ENCODE measurements at regions of chr4 and their contacts with region 1.

Region 1: DNA sequence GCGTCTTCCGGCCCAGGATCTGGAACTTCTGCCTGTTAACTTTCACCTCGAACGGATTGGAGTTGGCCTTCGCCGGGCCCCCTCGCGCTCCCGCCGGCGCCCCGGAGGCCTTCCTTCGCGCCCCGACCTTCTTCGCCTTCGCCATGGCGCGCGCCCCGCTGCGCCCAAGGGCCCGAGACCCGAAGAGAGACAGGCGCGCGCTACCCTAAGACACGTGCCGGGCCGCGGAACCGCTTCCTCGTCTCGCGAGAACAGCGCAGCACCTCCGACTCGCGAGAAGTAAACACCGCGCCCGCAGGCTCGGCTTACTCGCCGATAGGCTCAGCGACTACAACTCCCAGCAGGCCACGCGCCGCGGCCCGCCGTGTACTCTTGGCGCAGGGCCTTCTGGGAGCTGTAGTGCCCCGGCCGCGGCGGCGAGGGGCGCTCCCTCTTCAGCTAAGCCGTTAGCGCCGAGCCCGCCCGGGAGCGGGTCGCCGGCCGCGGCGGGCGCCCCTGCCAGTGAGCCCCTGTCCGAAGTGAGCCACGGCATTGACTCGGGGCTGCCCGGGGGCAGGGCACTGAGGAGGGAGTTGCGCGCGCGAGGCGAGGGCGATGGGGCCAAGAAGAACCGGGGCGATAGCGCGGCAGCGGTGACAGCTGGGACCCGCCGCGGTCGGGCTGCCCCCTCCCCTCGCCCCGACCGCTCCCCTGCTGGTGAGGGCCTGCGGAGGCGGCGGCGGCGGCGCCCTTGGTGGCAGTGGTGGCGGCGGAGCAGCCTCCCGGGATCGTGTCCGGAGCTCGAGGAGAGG is at the starts of genes GRK4 and NOP14:
- DNase-seq: peak; percentile 99
- ATAC-seq: peak; percentile 87
- H3K4me3 Mint-ChIP-seq: peak within 1 kb of the TSS; percentile 83
- H3K27ac Mint-ChIP-seq: peak within 1 kb of the TSS; percentile 86
- H3K4me1 Mint-ChIP-seq: peaks cover 34% of the 10 kb centered on the region
- H3K27me3 Mint-ChIP-seq: no peaks in the 10 kb centered on the region
- total RNA-seq, gene GRK4: 2.4 to 2.5 TPM
- total RNA-seq, gene NOP14: 86.8 to 106 TPM

Region 2: GRCh38 chr4:1856042-1856788 is 1107.2 kb before region 1 on chr4 and contains the start of gene LETM1:
- CTCF ChIA-PET with region 1: no interaction called
- POLR2A ChIA-PET with region 1: no interaction called
- intact Hi-C with region 1: loop called in 1 of 2 experiments (anchors 5 kb)
- DNase-seq: peak; percentile 97
- ATAC-seq: peak; percentile 99
- H3K4me3 Mint-ChIP-seq: peak within 1 kb of the TSS; percentile 78
- H3K27ac Mint-ChIP-seq: peak within 1 kb of the TSS; percentile 55
- H3K4me1 Mint-ChIP-seq: peaks cover 40% of the 10 kb centered on the region
- H3K27me3 Mint-ChIP-seq: no peaks in the 10 kb centered on the region
- total RNA-seq, gene LETM1: 41.6 to 51.3 TPM

Region 3: DNA sequence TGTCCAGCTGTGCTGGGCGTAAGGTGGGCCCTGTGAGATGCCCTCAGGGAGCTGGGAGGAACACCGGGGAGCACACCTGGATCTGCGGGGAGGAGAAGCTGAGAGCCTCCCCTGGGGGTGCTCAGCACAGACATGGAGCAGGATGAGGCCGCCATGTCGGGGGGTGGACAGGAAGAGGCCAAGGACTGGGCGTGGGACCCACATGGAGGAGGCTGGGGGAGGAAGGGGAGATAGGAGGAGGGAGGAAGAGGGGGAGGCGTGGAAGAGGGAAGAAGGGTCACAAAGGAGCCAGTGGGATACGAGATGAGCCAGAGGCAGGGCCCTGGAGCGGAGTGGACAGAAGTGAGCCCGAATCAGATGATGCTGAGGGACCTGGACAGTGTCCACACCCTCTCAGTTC is 611.2 kb before region 1 on chr4:
- CTCF ChIA-PET with region 1: no interaction called
- POLR2A ChIA-PET with region 1: no interaction called
- intact Hi-C with region 1: no loop called
- DNase-seq: no peak
- ATAC-seq: no peak
- H3K4me3 Mint-ChIP-seq: no peak overlapping the region
- H3K27ac Mint-ChIP-seq: no peak overlapping the region
- H3K4me1 Mint-ChIP-seq: peaks cover 14% of the 10 kb centered on the region
- H3K27me3 Mint-ChIP-seq: no peaks in the 10 kb centered on the region

Region 4: DNA sequence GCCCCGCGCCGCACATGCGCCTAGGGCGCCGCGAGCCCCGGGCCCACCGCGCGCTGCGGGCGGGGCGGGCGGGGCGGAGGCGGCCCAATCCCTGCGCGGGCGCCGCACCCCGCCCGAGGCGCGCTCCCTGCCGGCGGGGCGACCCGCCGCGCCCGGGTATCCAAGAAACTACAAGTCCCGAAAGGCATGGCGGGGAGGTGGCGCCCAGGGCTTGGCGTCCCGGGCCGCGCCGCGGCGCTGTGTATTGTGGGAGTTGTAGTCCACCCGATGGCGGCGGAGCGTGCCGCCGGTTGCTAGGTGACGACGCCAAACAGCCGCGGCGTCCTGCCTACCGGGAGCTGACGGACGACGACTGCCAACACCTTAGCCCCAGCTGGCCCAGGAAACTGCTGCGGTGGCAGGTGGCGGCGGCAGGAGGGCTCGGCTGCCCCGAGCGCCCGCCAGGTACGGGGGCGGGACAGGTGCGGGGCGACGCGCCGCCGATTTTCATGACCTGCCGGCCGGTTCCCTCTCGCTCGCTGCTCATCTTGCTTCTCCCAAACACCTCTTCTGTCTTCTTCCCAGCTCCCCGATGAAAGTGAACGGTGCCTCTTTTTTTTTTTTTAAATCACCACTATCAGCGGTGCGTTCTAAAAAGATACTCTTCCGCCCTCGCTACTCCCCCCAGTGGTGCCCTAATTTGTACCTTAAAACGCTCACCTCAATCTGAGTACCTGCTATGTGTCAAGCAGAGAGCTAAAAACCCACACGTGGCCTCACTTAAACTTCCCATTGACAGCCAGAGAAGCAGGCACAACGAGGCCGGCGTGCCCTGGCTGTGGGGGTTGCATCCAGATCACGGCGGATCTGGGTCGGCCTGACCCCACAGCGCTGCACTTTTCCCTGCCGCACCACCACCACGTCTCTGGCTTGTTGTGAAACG is 544.5 kb before region 1 on chr4 and contains the start of gene CFAP99:
- CTCF ChIA-PET with region 1: no interaction called
- POLR2A ChIA-PET with region 1: no interaction called
- intact Hi-C with region 1: loop called in 1 of 2 experiments (anchors 1 kb)
- DNase-seq: peak; percentile 99
- ATAC-seq: peak; percentile 93
- H3K4me3 Mint-ChIP-seq: peak within 1 kb of the TSS; percentile 82
- H3K27ac Mint-ChIP-seq: peak within 1 kb of the TSS; percentile 68
- H3K4me1 Mint-ChIP-seq: peaks cover 39% of the 10 kb centered on the region
- H3K27me3 Mint-ChIP-seq: peaks cover 27% of the 10 kb centered on the region
- total RNA-seq, gene CFAP99: 0.05 TPM in 1 of 2 experiments, not detected in the other

Region 5: DNA sequence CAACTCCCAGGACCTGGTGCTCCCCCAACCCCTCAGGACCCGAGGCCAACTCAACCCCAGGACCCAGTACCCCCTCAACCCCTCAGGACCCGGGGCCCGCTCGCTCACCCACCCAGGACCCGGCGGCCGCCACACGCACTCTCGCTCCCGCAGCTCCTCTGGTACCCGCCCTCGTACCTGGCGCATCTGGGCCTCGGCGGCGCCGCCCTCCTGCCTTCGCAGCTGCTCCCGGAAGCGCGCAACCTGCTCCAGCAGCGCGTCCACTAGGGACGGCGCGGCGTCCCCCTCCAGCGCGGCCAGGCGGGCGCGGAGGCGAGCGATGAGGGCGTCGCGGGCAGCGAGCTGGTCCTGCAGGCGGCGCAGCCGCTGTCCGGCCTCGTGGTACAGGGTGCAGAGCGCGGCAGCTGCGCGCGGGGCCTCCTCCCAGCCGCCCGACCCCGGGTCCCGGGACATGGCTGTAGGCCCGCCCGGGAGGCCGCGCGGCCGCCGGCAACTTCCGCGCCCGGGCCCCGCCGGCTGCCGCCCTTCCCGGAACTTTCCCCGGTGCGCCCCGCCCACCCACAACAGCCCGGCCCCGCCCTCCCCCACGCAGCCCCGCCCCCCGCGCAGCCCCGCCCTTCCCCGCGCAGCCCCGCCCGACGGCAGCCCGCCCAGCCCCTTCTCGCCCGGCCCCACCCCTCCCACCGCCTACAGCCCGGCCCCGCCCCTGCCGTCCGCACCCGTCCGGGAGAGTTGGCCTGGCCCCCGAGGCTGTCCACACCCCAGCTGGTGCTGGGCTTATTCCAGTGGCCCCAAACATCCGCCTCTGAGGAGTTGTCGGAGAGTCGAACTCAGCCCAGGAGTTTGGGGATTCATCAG is 207.3 kb before region 1 on chr4 and contains the start of gene TNIP2:
- CTCF ChIA-PET with region 1: no interaction called
- POLR2A ChIA-PET with region 1: no interaction called
- intact Hi-C with region 1: loop called in 1 of 2 experiments (anchors 1 kb)
- DNase-seq: peak; percentile 91
- ATAC-seq: peak; percentile 78
- H3K4me3 Mint-ChIP-seq: peak within 1 kb of the TSS; percentile 79
- H3K27ac Mint-ChIP-seq: peak within 1 kb of the TSS; percentile 66
- H3K4me1 Mint-ChIP-seq: peaks cover 33% of the 10 kb centered on the region
- H3K27me3 Mint-ChIP-seq: no peaks in the 10 kb centered on the region
- total RNA-seq, gene TNIP2: 50.6 to 59.4 TPM

Region 6: GRCh38 chr4:2934813-2935761 is 28.3 kb before region 1 on chr4:
- CTCF ChIA-PET with region 1: interaction called, 21 read pairs
- POLR2A ChIA-PET with region 1: interaction called, 21 read pairs
- intact Hi-C with region 1: loop called (anchors 1 kb)
- DNase-seq: peak; percentile 98
- ATAC-seq: peak; percentile 34
- H3K4me3 Mint-ChIP-seq: peak overlapping the region; percentile 90
- H3K27ac Mint-ChIP-seq: peak overlapping the region; percentile 95
- H3K4me1 Mint-ChIP-seq: peaks cover 53% of the 10 kb centered on the region
- H3K27me3 Mint-ChIP-seq: no peaks in the 10 kb centered on the region

Region 7: DNA sequence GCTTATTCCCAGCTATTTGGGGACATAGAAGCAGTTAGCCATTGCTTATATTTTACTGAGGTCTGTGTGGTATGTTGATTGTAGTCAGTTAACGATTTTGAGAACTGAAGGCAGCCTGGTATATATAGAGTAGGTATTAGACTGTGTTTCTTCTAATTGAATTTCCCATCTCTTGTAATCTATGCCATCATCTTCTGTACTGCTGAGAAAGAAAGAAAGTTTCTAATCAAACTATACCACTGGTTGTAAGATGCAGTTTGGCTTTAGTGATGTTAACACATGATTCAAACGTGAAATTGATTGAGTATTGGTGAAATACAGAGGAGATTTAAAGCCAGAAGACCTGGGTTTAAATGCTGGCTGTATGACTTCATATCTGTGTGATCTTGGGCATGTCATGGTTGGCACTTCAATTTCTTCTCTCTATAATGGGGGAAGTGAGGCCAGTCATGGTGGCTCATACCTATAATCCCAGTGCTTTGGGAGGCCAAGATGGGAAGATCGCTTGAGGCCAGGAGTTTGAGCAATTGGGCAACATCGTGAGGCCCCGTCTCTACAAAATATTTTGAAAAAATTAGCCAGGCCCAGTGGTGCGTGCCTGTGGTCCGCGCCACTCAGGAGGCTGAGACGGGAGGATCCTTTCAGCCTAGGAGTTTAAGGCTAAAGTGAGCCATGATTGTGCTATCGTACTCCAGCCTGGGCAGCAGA is 122.7 kb after region 1 on chr4:
- CTCF ChIA-PET with region 1: interaction called, 3 read pairs
- POLR2A ChIA-PET with region 1: no interaction called
- intact Hi-C with region 1: loop called in 1 of 2 experiments (anchors 5 kb)
- DNase-seq: no peak
- ATAC-seq: peak; percentile 50
- H3K4me3 Mint-ChIP-seq: peak overlapping the region; percentile 20
- H3K27ac Mint-ChIP-seq: peak overlapping the region; percentile 96
- H3K4me1 Mint-ChIP-seq: peaks cover 68% of the 10 kb centered on the region
- H3K27me3 Mint-ChIP-seq: no peaks in the 10 kb centered on the region

Measured in activated CD4-positive, alpha-beta T cell treated with anti-CD3 and anti-CD28 coated beads for 36 hours (primary cell).